B cell (primary cell): ENCODE measurements at regions of chr17 and their contacts with region 1.

Region 1: GRCh38 chr17:44968226-44969143 is at the start of gene C1QL1:
- DNase-seq: peak; percentile 89
- ATAC-seq: peak; percentile 98
- H3K4me3 ChIP-seq: peak within 1 kb of the TSS in 4 of 5 experiments; percentile 25 to 52 (median 48)
- H3K4me3 Mint-ChIP-seq: peak within 1 kb of the TSS; percentile 75
- H3K27ac ChIP-seq: no peak within 1 kb of the TSS
- H3K27ac Mint-ChIP-seq: no peak within 1 kb of the TSS
- H3K4me1 ChIP-seq: peaks cover 32 to 45% of the 10 kb centered on the region in 2 donors
- H3K4me1 Mint-ChIP-seq: peaks cover 40% of the 10 kb centered on the region
- H3K27me3 ChIP-seq: peaks cover 0 to 61% (median 35%) of the 10 kb centered on the region in 4 experiments
- H3K27me3 Mint-ChIP-seq: peaks cover 54% of the 10 kb centered on the region
- CTCF ChIP-seq: no peak
- total RNA-seq, gene C1QL1: not detected in 2 replicates

Region 2: GRCh38 chr17:44947461-44948314 is 20.8 kb before region 1 on chr17 and contains the start of gene KIF18B:
- CTCF ChIA-PET with region 1: interaction called, 3 read pairs
- POLR2A ChIA-PET with region 1: no interaction called
- intact Hi-C with region 1: loop called (anchors 1 kb)
- DNase-seq: peak; percentile 91
- ATAC-seq: peak; percentile 98
- H3K4me3 ChIP-seq: peak within 1 kb of the TSS; percentile 62 to 79 (median 67)
- H3K4me3 Mint-ChIP-seq: peak within 1 kb of the TSS; percentile 99
- H3K27ac ChIP-seq: peak within 1 kb of the TSS; percentile 56 to 64
- H3K27ac Mint-ChIP-seq: peak within 1 kb of the TSS; percentile 95
- H3K4me1 ChIP-seq: peaks cover 7 to 15% of the 10 kb centered on the region in 2 donors
- H3K4me1 Mint-ChIP-seq: peaks cover 8% of the 10 kb centered on the region
- H3K27me3 ChIP-seq: peaks cover 0 to 4% (median 4%) of the 10 kb centered on the region in 4 experiments
- H3K27me3 Mint-ChIP-seq: peaks cover 6% of the 10 kb centered on the region
- CTCF ChIP-seq: no peak
- total RNA-seq, gene KIF18B: 0.44 TPM in 1 of 2 replicates, not detected in the other

Region 3: DNA sequence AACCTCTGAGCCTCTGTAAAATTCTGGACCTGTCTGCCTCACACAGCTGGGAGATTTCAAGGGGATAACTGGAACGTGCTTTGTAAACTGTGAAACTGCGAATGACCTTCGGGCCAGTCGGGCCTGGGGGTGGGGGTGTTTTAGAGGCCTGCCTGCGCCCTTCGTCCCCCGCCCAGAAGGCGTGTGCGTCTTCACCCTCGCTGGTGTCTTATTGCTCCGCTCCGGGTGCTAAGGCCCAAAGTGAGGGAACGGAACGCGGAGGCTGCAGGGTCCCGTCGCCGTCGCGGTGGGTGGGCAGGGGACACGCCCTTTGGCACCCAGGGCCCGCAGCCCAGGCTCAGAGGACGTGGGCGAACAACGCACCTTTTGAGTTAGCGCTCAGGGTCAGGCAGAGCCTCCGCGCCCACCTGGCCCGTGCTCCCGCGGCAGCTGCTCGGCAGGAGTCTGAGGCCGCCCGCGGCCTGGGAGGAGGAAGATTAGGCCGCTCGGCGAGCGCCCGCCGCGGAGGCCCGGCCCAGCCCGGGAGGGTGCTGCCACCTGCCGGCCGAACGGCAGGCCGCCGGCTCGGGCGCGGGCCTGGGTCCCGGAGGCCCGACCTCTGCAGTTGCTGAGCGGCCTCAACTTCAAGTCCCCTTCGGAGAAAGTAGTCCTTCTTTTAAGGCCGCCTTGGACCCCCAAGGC is 53.3 kb after region 1 on chr17:
- CTCF ChIA-PET with region 1: interaction called, 3 read pairs
- POLR2A ChIA-PET with region 1: no interaction called
- intact Hi-C with region 1: loop called (anchors 5 kb)
- DNase-seq: peak; percentile 82
- ATAC-seq: peak; percentile 84
- H3K4me3 ChIP-seq: peak overlapping the region in 4 of 5 experiments; percentile 28 to 53 (median 44)
- H3K4me3 Mint-ChIP-seq: peak overlapping the region; percentile 75
- H3K27ac ChIP-seq: no peak overlapping the region
- H3K27ac Mint-ChIP-seq: peak overlapping the region; percentile 60
- H3K4me1 ChIP-seq: peaks cover 27 to 28% of the 10 kb centered on the region in 2 donors
- H3K4me1 Mint-ChIP-seq: peaks cover 27% of the 10 kb centered on the region
- H3K27me3 ChIP-seq: peaks cover 0 to 43% (median 34%) of the 10 kb centered on the region in 4 experiments
- H3K27me3 Mint-ChIP-seq: peaks cover 33% of the 10 kb centered on the region
- CTCF ChIP-seq: peak; percentile 90

Region 4: DNA sequence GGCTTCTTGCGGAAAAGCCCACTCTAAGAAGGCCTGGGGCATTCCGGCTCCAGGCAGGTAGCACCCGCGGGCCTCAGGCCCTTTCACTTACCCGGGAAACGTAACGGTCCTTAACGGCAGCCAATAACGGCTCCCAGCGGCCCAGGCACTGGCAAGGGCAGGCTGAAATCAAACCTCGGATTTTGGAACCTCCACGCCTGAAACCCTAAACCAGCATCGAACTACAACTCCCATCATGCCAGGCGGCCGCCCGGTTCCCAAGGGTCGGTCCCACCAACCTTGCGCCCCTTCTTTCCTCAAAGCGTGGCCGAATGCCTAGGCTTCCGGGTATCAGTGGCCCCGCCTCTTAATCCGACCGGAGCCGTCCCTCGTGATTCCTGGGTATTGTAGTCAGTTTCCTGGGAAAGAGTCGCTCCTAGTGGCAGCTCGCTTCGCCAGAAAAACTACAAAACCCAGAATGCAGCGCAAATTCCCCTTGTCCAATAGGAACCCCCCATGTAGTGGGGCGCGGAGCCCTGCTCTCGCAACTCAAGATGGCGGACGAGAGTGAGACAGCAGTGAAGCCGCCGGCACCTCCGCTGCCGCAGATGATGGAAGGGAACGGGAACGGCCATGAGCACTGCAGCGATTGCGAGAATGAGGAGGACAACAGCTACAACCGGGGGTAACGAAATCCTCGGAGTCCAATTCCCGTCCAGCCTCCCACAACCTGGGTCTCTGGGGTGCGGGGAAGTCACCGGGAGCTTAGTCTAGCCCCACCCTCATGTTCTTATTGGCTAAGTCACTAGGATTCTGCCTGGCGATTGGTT is 92.5 kb after region 1 on chr17 and contains the start of gene NMT1:
- CTCF ChIA-PET with region 1: no interaction called
- POLR2A ChIA-PET with region 1: no interaction called
- intact Hi-C with region 1: loop called (anchors 1 kb)
- DNase-seq: peak; percentile 100
- ATAC-seq: peak; percentile 87
- H3K4me3 ChIP-seq: peak within 1 kb of the TSS; percentile 62 to 98 (median 96)
- H3K4me3 Mint-ChIP-seq: peak within 1 kb of the TSS; percentile 99
- H3K27ac ChIP-seq: peak within 1 kb of the TSS; percentile 75 to 89
- H3K27ac Mint-ChIP-seq: peak within 1 kb of the TSS; percentile 100
- H3K4me1 ChIP-seq: peaks cover 29 to 42% of the 10 kb centered on the region in 2 donors
- H3K4me1 Mint-ChIP-seq: peaks cover 40% of the 10 kb centered on the region
- H3K27me3 ChIP-seq: no peaks in the 10 kb centered on the region
- H3K27me3 Mint-ChIP-seq: no peaks in the 10 kb centered on the region
- CTCF ChIP-seq: no peak
- total RNA-seq, gene NMT1: 123 and 134 TPM in 2 replicates

Region 5: GRCh38 chr17:45573924-45574770 is 605.7 kb after region 1 on chr17:
- CTCF ChIA-PET with region 1: no interaction called
- POLR2A ChIA-PET with region 1: no interaction called
- intact Hi-C with region 1: no loop called
- DNase-seq: no peak
- ATAC-seq: no peak
- H3K4me3 ChIP-seq: no peak overlapping the region
- H3K4me3 Mint-ChIP-seq: no peak overlapping the region
- H3K27ac ChIP-seq: no peak overlapping the region
- H3K27ac Mint-ChIP-seq: no peak overlapping the region
- H3K4me1 ChIP-seq: peaks cover 0 to 8% of the 10 kb centered on the region in 2 donors
- H3K4me1 Mint-ChIP-seq: peaks cover 43% of the 10 kb centered on the region
- H3K27me3 ChIP-seq: no peaks in the 10 kb centered on the region
- H3K27me3 Mint-ChIP-seq: no peaks in the 10 kb centered on the region
- CTCF ChIP-seq: no peak